OCI-LY7 (cell line): ENCODE measurements at regions of chr4 and their contacts with region 1.

Region 1: DNA sequence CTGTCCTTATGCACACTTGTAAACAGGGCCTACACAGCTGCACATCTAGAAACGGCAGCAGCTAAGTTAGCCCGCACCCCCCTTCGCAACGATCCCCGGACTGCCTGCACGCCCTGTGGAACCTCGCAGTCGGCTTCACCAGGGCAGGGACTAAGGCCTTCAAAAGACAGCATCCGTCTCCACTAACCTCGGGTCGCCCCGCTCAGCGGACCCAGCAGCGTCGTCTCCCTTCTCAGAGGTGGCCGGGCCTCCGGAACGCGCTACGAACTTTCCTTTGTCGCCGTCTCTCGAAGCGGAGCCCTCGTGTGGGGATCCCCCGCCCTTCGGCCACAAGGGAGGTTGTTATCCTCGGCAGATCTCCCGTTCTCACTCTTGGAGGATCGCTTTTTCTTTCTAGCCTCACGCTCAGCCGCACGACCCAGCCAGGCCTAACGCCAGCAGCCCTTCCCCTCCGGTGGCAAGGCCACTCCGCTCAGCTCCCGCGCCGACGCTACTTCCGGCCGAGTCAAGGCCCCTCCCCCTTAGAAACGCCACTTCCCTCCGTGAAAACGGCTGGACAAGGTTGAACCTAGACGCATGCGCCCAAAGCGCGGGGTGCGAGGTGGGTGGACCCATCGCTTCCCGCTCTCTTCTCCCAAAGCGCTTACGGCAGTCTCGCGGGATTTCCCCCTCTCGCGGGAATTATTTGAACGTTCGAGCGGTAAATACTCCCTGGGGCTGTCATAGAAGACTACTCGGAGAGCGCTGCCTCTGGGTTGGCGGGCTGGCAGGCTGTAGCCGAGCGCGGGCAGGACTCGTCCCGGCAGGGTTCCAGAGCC is at the starts of genes DCAF16 and NCAPG:
- DNase-seq: peak; percentile 100
- H3K4me3 ChIP-seq: peak within 1 kb of the TSS; percentile 85
- H3K27ac ChIP-seq: peak within 1 kb of the TSS; percentile 91
- H3K4me1 ChIP-seq: peaks cover 52% of the 10 kb centered on the region
- CTCF ChIP-seq: no peak
- total RNA-seq, gene DCAF16: 88.7 and 88.8 TPM in 2 replicates
- total RNA-seq, gene NCAPG: 57.5 and 68.6 TPM in 2 replicates

Region 2: DNA sequence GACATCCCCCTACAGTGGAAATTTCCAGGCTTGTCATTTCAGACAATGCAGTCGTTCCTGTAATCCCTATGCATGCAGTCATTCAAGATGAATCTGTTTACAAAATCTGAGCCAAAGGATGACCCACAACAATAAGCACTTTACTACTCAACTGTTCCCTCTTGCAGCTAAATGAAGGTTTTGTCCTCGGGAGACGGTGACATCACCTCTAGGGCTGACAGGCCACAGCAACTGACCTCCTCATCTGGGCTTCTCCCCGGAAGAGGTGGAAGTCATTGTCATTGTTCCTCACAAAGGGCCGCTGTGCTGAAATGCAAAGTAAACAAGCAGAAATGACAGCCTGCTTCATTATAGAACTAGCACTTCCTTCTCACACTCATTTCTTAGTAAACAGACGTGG is 266.3 kb before region 1 on chr4:
- CTCF ChIA-PET with region 1: interaction called, 3 read pairs
- POLR2A ChIA-PET with region 1: interaction called, 7 read pairs
- intact Hi-C with region 1: loop called (anchors 1 kb)
- DNase-seq: no peak
- H3K4me3 ChIP-seq: no peak overlapping the region
- H3K27ac ChIP-seq: no peak overlapping the region
- H3K4me1 ChIP-seq: no peaks in the 10 kb centered on the region
- CTCF ChIP-seq: no peak

Region 3: DNA sequence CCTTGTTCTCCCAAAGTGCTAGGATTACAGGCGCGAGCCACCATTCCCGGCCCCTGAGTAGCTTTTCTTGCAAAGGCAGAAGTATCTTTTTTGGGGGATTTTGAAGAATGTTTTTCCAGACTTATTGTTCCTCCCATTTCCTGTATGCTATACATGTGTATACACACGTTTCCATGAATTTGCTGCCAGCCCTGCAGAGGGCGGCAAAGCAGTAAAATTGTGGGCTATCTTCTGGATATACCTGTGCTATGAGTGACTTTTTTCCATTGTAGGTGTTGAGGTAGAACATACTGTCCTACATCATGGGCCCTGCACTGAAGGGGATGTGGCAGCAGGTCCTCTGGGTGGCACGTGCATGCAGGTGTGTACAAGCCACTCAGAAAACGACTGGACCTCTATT is 213.0 kb before region 1 on chr4:
- CTCF ChIA-PET with region 1: no interaction called
- POLR2A ChIA-PET with region 1: no interaction called
- intact Hi-C with region 1: loop called (anchors 2 kb)
- DNase-seq: no peak
- H3K4me3 ChIP-seq: no peak overlapping the region
- H3K27ac ChIP-seq: no peak overlapping the region
- H3K4me1 ChIP-seq: peaks cover 36% of the 10 kb centered on the region
- CTCF ChIP-seq: peak; percentile 63

Region 4: DNA sequence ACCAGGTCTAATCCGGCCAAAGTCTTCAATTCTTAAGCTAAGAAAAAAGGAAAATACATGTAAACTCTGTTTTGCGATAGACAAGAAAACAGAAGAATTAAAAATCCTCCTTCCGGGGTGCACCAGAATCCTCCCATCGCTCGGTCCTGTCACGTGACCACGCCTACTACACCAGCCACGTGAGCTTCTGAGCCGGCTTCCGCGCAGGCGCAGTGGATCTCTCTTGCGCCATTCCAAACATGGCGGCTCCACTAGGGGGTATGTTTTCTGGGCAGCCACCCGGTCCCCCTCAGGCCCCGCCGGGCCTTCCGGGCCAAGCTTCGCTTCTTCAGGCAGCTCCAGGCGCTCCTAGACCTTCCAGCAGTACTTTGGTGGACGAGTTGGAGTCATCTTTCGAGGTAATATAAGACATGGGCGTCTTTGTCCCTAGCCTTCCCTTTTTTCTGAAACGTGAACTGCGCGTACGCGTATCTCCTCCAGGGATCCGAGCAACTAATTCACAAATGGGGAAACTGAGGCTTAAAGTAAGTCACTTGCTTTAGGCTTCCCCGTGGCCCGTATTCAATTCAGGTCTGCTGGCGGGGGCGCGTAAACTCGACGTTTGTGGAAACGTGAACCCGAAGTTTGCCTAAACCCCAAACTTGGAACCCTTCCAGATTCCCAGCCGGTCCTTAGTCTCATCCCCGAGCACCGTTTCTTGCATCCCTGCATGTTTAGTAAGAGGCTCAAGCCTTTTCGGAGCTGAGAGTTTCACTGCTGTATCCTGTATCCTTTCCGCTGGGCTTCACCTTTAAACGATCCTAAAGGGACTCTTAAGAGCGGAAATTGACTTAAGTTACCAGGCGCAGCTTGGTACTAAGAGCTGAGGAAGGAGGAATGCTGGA is 195.8 kb before region 1 on chr4 and contains the start of gene MED28:
- CTCF ChIA-PET with region 1: no interaction called
- POLR2A ChIA-PET with region 1: no interaction called
- intact Hi-C with region 1: loop called (anchors 1 kb)
- DNase-seq: peak; percentile 98
- H3K4me3 ChIP-seq: peak within 1 kb of the TSS; percentile 88
- H3K27ac ChIP-seq: peak within 1 kb of the TSS; percentile 52
- H3K4me1 ChIP-seq: peaks cover 32% of the 10 kb centered on the region
- CTCF ChIP-seq: no peak
- total RNA-seq, gene MED28: 20.7 and 27.0 TPM in 2 replicates

Region 5: DNA sequence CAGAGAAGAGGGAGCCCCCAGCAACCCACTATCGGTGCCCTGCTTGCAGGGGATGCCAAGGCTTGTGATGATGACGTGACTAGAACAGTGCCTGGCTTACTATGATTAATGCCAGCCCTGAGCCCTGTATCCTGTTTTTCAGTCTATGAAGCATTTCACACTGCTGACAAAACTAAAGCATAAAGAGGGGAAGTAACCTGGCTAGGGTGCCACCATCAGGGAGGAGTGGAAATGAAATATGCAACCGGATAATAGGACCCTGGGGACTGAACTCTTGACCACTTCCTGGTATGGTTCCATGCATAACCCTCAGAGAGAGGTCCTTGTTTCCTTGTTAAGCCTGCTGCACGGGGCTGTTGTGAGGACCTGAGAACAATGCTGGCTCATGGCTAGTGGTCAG is 145.7 kb before region 1 on chr4:
- CTCF ChIA-PET with region 1: no interaction called
- POLR2A ChIA-PET with region 1: no interaction called
- intact Hi-C with region 1: loop called (anchors 2 kb)
- DNase-seq: peak; percentile 93
- H3K4me3 ChIP-seq: peak overlapping the region; percentile 50
- H3K27ac ChIP-seq: peak overlapping the region; percentile 67
- H3K4me1 ChIP-seq: peaks cover 47% of the 10 kb centered on the region
- CTCF ChIP-seq: peak; percentile 66

Region 6: GRCh38 chr4:17797808-17798207 is 12.7 kb before region 1 on chr4:
- CTCF ChIA-PET with region 1: no interaction called
- POLR2A ChIA-PET with region 1: interaction called, 13 read pairs
- intact Hi-C with region 1: no loop called
- DNase-seq: no peak
- H3K4me3 ChIP-seq: no peak overlapping the region
- H3K27ac ChIP-seq: no peak overlapping the region
- H3K4me1 ChIP-seq: no peaks in the 10 kb centered on the region
- CTCF ChIP-seq: no peak

Region 7: GRCh38 chr4:18021722-18022571 is 211.5 kb after region 1 on chr4 and contains the start of gene LCORL:
- CTCF ChIA-PET with region 1: no interaction called
- POLR2A ChIA-PET with region 1: no interaction called
- intact Hi-C with region 1: loop called (anchors 2 kb)
- DNase-seq: peak; percentile 96
- H3K4me3 ChIP-seq: peak within 1 kb of the TSS; percentile 99
- H3K27ac ChIP-seq: peak within 1 kb of the TSS; percentile 79
- H3K4me1 ChIP-seq: peaks cover 23% of the 10 kb centered on the region
- CTCF ChIP-seq: peak; percentile 60
- total RNA-seq, gene LCORL: 16.0 and 31.4 TPM in 2 replicates